H1 (cell line): ENCODE measurements at regions of chr6 and their contacts with region 1.

Region 1: GRCh38 chr6:37489660-37490361 is 9.9 kb downstream of the CCDC167 start:
- DNase-seq: no peak
- H3K4me3 ChIP-seq: no peak overlapping the region
- H3K27ac ChIP-seq: no peak overlapping the region
- H3K4me1 ChIP-seq: peaks cover 12 to 30% (median 18%) of the 10 kb centered on the region in 4 experiments
- H3K27me3 ChIP-seq: peaks cover 0 to 2% (median 0%) of the 10 kb centered on the region in 4 experiments; a peak in 1 of 7 replicates
- CTCF ChIP-seq: no peak
- EP300 ChIP-seq: no peak
- POLR2A ChIP-seq: no peak
- RAD21 ChIP-seq: no peak

Region 2: GRCh38 chr6:37314487-37315156 is 175.2 kb before region 1 on chr6:
- CTCF ChIA-PET with region 1: no interaction called
- POLR2A ChIA-PET with region 1: no interaction called
- DNase-seq: peak; percentile 17 to 54
- H3K4me3 ChIP-seq: no peak overlapping the region
- H3K27ac ChIP-seq: no peak overlapping the region
- H3K4me1 ChIP-seq: no peaks in the 10 kb centered on the region
- H3K27me3 ChIP-seq: no peaks in the 10 kb centered on the region
- CTCF ChIP-seq: peak; percentile 60 to 84 (median 83)
- EP300 ChIP-seq: no peak
- POLR2A ChIP-seq: no peak
- RAD21 ChIP-seq: peak; percentile 56 to 70

Region 3: DNA sequence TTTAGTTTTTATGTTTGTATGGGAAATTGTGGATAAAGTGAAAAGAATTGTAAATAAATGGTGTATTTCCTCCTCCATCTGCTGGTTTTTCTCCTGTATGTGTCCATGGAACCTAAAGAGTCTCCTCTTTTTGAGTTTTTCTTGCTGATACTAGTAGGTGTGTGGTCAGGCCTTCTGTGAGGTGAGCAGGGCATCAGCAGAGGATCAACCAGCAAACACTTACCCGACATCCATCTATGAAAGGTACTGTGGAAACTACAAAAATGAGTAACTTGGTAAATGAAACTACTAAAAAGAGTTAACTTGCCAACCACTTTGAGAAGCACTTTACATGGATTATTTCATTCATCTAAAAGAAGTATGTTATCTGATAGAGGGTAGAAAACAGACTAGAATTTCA is 156.9 kb before region 1 on chr6:
- CTCF ChIA-PET with region 1: no interaction called
- POLR2A ChIA-PET with region 1: no interaction called
- DNase-seq: no peak
- H3K4me3 ChIP-seq: no peak overlapping the region
- H3K27ac ChIP-seq: no peak overlapping the region
- H3K4me1 ChIP-seq: no peaks in the 10 kb centered on the region
- H3K27me3 ChIP-seq: no peaks in the 10 kb centered on the region
- CTCF ChIP-seq: no peak
- EP300 ChIP-seq: no peak
- POLR2A ChIP-seq: no peak
- RAD21 ChIP-seq: no peak

Region 4: DNA sequence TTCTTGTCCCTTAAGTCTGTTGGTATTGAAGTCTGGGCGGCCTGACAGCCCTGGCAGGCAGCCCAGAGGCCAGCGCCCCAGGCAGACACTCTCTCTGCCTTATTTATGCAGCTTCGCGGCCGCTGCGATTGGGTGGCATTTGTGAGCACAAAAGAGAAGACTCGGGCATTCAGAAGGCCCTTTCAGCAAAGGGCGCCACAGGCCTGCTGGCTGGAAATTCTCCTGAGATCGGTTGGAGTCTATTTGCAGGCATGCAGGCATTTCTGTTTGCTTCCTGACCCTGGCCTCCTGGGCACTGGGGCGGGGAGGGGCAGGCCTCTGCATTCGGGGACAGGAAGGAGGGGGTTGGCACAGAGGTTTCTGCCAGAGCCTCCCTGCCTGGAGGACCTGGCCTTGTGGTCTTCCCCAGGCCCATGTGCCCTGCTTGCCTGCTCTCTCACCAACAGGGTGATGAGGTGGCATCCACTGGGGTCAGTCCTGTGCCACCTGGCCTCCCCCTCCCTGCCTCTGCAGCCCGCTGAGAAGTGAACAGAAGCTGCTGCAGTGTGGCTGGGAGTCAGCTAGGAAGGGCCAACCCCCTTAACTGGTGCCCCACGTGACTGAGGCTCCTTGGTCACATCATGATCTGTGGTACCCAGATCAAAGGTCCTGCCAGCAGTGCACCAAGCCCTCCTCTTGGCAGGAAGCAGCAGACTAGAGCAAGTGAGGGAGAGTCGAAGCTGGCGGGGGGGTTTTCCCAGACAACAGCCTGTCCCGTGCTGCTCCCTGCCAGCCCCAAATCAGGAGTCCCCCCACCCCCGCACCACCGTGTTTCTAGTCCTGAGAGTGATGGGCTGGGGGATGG is 26.5 kb after region 1 on chr6:
- CTCF ChIA-PET with region 1: interaction called, 12 read pairs
- POLR2A ChIA-PET with region 1: interaction called, 10 read pairs
- DNase-seq: no peak
- H3K4me3 ChIP-seq: no peak overlapping the region
- H3K27ac ChIP-seq: no peak overlapping the region
- H3K4me1 ChIP-seq: peaks cover 2 to 47% (median 39%) of the 10 kb centered on the region in 4 experiments
- H3K27me3 ChIP-seq: peaks cover 0 to 24% (median 16%) of the 10 kb centered on the region in 4 experiments; a peak in 6 of 7 replicates
- CTCF ChIP-seq: no peak
- EP300 ChIP-seq: no peak
- POLR2A ChIP-seq: no peak
- RAD21 ChIP-seq: no peak; a peak in 1 of 4 replicates

Region 5: GRCh38 chr6:37556881-37557644 is 67.3 kb after region 1 on chr6:
- CTCF ChIA-PET with region 1: interaction called, 23 read pairs
- POLR2A ChIA-PET with region 1: interaction called, 4 read pairs
- DNase-seq: no peak
- H3K4me3 ChIP-seq: no peak overlapping the region
- H3K27ac ChIP-seq: no peak overlapping the region
- H3K4me1 ChIP-seq: peaks cover 0 to 6% (median 2%) of the 10 kb centered on the region in 4 experiments; a peak in 4 of 7 replicates
- H3K27me3 ChIP-seq: peaks cover 0 to 5% (median 3%) of the 10 kb centered on the region in 4 experiments; a peak in 3 of 7 replicates
- CTCF ChIP-seq: no peak
- EP300 ChIP-seq: no peak
- POLR2A ChIP-seq: no peak
- RAD21 ChIP-seq: no peak